MCF 10A (cell line): ENCODE measurements at regions of chr1 and their contacts with region 1.

Region 1: GRCh38 chr1:73998348-73998959 is 199.5 kb downstream of the LRRIQ3 start:
- DNase-seq: peak; percentile 40
- H3K4me3 Mint-ChIP-seq: no peak overlapping the region
- H3K27ac Mint-ChIP-seq: no peak overlapping the region
- H3K4me1 Mint-ChIP-seq: no peaks in the 10 kb centered on the region
- H3K27me3 Mint-ChIP-seq: no peaks in the 10 kb centered on the region
- CTCF ChIP-seq: peak; percentile 36

Region 2: GRCh38 chr1:73744985-73745384 is 253.5 kb before region 1 on chr1:
- CTCF ChIA-PET with region 1: no interaction called
- POLR2A ChIA-PET with region 1: no interaction called
- intact Hi-C with region 1: no loop called
- DNase-seq: no peak
- H3K4me3 Mint-ChIP-seq: no peak overlapping the region
- H3K27ac Mint-ChIP-seq: no peak overlapping the region
- H3K4me1 Mint-ChIP-seq: no peaks in the 10 kb centered on the region
- H3K27me3 Mint-ChIP-seq: no peaks in the 10 kb centered on the region
- CTCF ChIP-seq: no peak

Region 3: DNA sequence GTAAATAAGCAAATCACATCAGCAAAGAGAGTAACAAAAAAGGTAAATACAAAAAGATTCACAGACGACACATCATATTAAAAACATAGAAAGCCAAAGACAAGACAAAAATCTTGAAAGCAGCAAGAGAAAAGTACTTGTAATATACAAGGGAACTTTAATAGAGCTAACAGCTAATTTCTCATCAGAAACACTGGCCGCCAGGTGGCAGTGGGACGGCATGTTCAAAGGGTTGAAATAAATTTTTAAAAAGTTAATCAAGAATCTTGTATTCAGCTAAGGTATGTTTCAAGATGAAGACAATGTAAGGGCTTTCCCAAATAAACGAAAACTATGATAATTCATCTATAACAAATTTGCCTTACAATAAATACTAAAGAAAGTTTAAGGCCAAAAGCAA is 158.5 kb before region 1 on chr1:
- CTCF ChIA-PET with region 1: interaction called, 15 read pairs
- POLR2A ChIA-PET with region 1: no interaction called
- intact Hi-C with region 1: loop called (anchors 1 kb)
- DNase-seq: peak; percentile 49
- H3K4me3 Mint-ChIP-seq: no peak overlapping the region
- H3K27ac Mint-ChIP-seq: no peak overlapping the region
- H3K4me1 Mint-ChIP-seq: no peaks in the 10 kb centered on the region
- H3K27me3 Mint-ChIP-seq: no peaks in the 10 kb centered on the region
- CTCF ChIP-seq: peak; percentile 46

Region 4: DNA sequence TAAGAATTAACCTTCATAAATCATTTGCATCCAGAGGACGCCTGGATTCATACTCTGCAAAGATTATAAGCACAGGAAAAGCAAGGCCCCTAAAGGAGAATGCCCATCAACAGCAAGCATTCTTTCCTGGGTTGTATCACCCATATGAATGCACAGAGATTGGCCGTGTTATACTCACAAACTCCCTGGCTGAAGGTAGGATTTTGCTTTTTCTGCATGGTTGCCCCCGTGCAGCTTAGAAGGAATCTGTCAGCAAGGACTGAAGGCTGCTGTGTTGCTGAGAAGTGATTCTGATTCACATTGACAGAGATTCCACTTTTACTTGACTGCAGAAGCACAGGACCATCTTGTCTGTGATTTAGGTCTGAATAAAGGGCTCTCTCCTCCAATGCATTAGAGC is 83.5 kb before region 1 on chr1:
- CTCF ChIA-PET with region 1: no interaction called
- POLR2A ChIA-PET with region 1: no interaction called
- intact Hi-C with region 1: no loop called
- DNase-seq: no peak
- H3K4me3 Mint-ChIP-seq: no peak overlapping the region
- H3K27ac Mint-ChIP-seq: no peak overlapping the region
- H3K4me1 Mint-ChIP-seq: no peaks in the 10 kb centered on the region
- H3K27me3 Mint-ChIP-seq: no peaks in the 10 kb centered on the region
- CTCF ChIP-seq: no peak